ENCODE measurements at regions of chr14 and their contacts with region 1.

Region 1: DNA sequence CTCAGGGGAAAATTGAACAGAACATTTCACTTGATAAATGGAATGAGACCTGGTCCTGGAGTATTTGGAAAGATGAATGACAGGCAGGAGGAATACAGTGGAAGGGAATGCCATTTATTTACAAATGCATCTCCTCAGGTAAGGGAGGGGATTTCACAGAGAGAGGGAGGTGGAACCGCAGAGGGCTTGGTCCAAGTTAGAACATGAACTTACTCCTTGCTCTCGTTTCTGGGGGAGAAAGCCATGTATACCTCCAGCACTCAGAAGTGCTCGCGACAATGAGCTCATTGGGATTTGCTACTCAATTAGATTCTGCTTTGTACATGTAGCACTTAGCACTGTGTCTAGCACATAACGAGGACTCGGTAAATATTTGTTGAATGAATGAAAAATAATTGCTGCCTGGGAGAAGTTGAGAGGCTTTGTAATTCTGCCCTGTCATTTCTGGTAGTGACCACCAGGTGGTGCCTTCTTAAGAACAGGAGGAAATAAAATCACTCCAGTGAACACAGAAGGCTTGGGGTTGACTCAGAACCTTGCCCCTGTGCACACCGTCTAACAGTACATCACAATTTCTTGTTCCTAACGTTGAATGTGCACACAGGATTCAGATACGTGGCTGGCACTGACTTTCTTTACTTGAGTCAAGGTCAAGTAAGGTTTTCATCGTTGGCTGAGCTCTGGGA is 91.6 kb downstream of the RGS6 start:
- DNase-seq: no peak
- H3K4me3 ChIP-seq: no peak overlapping the region
- H3K27ac ChIP-seq: no peak overlapping the region
- H3K4me1 ChIP-seq: peaks cover 0 to 4% (median 0%) of the 10 kb centered on the region in 6 donors
- H3K27me3 ChIP-seq: peaks cover 0 to 37% (median 0%) of the 10 kb centered on the region in 7 donors
- CTCF ChIP-seq: peak in 10 of 11 experiments; percentile 23 to 70 (median 54)
- POLR2A ChIP-seq: no peak

Region 2: DNA sequence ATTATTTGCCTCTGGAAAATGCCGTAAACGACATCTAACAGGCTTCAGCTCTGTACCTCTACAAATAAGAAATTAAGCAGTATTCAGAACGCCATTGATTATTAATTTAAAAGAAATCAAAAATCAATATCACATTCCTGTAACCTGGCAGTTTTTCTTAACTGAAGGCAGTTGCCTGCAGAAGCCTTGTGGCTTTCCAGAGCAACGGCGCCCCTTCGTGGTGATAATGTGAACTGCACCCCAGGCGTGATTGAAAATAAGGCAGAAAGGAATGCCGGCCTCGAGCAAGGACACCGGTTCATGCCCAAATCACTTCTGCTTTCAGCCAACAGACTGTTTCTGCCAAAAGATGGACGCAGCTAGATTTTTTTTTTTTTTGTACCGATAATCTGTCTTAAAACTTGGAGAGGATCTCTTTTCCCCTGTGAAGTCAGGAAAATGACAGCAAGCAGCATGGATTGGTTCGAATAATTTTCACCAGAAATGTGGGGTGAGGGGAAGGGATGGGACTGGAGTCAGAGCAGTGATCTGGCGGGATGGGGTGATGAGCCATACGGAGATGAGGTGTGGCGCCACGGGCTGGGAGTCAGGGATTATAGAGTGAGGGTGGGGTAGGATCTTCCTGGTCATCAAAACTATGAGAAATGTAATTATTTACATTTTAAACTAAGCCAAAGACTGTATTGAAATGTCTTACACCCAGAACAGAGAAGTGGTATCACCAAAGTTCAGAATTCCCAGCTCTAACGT is 397.0 kb after region 1 on chr14:
- intact Hi-C with region 1: loop called (anchors 10 kb)
- DNase-seq: no peak
- H3K4me3 ChIP-seq: no peak overlapping the region
- H3K27ac ChIP-seq: no peak overlapping the region
- H3K4me1 ChIP-seq: peaks cover 0 to 4% (median 0%) of the 10 kb centered on the region in 6 donors
- H3K27me3 ChIP-seq: peaks cover 0 to 3% (median 0%) of the 10 kb centered on the region in 7 donors
- CTCF ChIP-seq: peak; percentile 68 to 91 (median 81)
- POLR2A ChIP-seq: no peak